GM23248 (cell line): ENCODE measurements at regions of chr17 and their contacts with region 1.

Region 1: DNA sequence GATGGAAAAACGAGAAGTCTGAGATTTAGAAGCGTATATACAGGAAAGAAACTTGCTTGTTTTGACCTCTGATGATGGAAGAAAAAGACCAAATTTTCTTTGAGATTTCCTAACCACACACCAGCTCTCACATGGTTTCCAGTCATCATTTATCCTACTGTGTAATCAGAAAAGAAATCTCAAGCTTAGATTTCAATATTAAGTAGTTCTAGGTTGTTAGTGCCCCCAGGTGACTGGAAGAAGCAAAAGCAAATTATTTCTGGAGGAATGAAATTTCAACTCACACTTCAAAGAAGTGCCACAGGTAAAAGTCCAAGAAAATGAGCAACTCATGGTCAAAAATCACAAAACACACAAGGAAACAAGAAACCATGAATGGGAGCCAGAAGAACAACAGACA is 51.8 kb upstream of the KDM6B start:
- DNase-seq: peak; percentile 67
- H3K4me3 ChIP-seq: no peak overlapping the region
- H3K27ac ChIP-seq: no peak overlapping the region
- H3K4me1 ChIP-seq: no peaks in the 10 kb centered on the region
- H3K27me3 ChIP-seq: 0 out of 2 replicates have a peak, but pooled peaks cover 12% of the 10 kb centered on the region

Region 2: DNA sequence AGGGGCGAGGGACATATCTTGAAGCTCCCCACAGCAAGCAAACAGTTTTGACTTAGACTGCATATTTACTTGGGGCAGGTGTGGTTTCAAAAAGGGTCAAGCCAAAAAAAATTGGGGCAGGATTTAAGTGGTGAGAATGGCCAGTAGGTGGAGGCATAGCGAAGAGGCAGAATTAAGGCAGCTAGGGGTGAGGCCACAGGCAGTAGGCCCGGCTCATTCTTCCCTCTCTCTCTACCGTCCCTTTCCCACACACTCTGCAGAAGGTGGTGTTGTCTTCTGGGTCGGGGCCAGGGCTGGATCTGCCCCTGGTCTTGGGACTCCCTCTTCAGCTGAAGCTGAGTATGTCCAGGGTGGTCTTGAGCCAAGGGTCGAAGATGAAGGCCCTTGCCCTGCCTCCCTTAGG is 149.7 kb before region 1 on chr17:
- in situ Hi-C with region 1: loop called (anchors 10 kb)
- DNase-seq: peak; percentile 79
- H3K4me3 ChIP-seq: no peak overlapping the region
- H3K27ac ChIP-seq: no peak overlapping the region
- H3K4me1 ChIP-seq: no peaks in the 10 kb centered on the region
- H3K27me3 ChIP-seq: no peaks in the 10 kb centered on the region